Activated CD4-positive, alpha-beta memory T cell treated with anti-CD3 and anti-CD28 coated beads for 36 hours (primary cell): ENCODE measurements at regions of chr1 and their contacts with region 1.

Region 1: GRCh38 chr1:192983349-192983980 is 75.7 kb downstream of the UCHL5 start:
- DNase-seq: peak; percentile 68
- H3K4me3 Mint-ChIP-seq: no peak overlapping the region
- H3K27ac Mint-ChIP-seq: peak overlapping the region; percentile 82
- H3K4me1 Mint-ChIP-seq: peaks cover 45% of the 10 kb centered on the region
- H3K27me3 Mint-ChIP-seq: no peaks in the 10 kb centered on the region

Region 2: DNA sequence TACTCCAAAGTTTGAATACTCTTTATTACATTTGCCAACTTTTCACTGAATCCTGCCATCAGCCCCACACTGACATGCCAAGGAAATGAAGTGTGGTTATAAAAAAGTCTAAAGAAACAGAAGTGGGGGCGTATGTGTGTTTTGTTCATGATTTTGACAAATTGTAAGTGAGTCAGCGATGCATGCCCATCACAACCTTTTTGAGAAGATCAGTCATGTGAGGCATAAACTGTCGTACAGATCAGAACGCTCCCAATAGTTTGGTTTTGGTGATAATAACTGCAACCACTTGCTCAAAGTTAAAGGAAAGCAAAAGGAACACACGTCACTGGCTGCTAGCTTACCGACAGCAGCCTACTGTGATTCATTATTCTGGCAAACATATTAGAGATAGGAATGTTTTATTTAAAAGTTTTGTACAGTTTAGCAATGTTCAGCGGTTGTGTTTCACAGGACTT is 79.0 kb before region 1 on chr1:
- CTCF ChIA-PET with region 1: no interaction called
- POLR2A ChIA-PET with region 1: no interaction called
- intact Hi-C with region 1: loop called (anchors 1 kb)
- DNase-seq: peak; percentile 20
- H3K4me3 Mint-ChIP-seq: no peak overlapping the region
- H3K27ac Mint-ChIP-seq: no peak overlapping the region
- H3K4me1 Mint-ChIP-seq: no peaks in the 10 kb centered on the region
- H3K27me3 Mint-ChIP-seq: no peaks in the 10 kb centered on the region